ENCODE measurements at regions of chr1 and their contacts with region 1.

Region 1: DNA sequence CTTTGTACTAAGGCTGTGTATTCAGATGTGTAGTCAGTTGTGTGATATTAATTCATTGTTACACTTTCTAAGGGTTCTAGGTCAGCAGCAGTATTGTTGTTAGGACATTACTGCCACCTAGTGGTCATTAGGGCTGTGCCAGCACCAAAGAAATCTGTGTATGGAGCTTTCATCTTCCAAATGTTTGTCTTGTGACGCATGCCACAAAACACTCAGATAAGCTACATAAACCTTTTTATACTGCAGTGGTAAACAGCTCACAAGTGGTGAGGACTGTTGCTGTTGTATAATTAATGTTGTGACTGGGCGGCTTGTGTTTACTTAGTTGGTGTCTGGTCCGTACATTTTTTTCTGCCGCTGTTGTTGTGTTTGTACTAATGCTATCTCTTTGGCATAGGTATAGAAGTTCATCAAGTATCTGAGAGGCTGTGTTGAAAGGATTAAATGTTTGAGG is 51.7 kb downstream of the S1PR1 start:
- DNase-seq: peak; percentile 56
- ATAC-seq: peak; percentile 75
- H3K4me3 Mint-ChIP-seq: no peak overlapping the region
- H3K27ac Mint-ChIP-seq: no peak overlapping the region
- H3K4me1 Mint-ChIP-seq: peaks cover 20% of the 10 kb centered on the region
- H3K27me3 Mint-ChIP-seq: no peaks in the 10 kb centered on the region
- CTCF ChIP-seq: peak; percentile 82

Region 2: GRCh38 chr1:101136739-101137138 is 151.8 kb before region 1 on chr1:
- CTCF ChIA-PET with region 1: interaction called, 25 read pairs
- POLR2A ChIA-PET with region 1: no interaction called
- DNase-seq: no peak
- ATAC-seq: peak; percentile 76
- H3K4me3 Mint-ChIP-seq: peak overlapping the region; percentile 51
- H3K27ac Mint-ChIP-seq: peak overlapping the region; percentile 35; the same call in 1 of the 2 replicates
- H3K4me1 Mint-ChIP-seq: peaks cover 40% of the 10 kb centered on the region
- H3K27me3 Mint-ChIP-seq: no peaks in the 10 kb centered on the region
- CTCF ChIP-seq: no peak

Region 3: GRCh38 chr1:101203820-101204540 is 84.5 kb before region 1 on chr1:
- CTCF ChIA-PET with region 1: no interaction called
- POLR2A ChIA-PET with region 1: no interaction called
- DNase-seq: no peak
- ATAC-seq: no peak
- H3K4me3 Mint-ChIP-seq: no peak overlapping the region
- H3K27ac Mint-ChIP-seq: no peak overlapping the region
- H3K4me1 Mint-ChIP-seq: peaks cover 5% of the 10 kb centered on the region
- H3K27me3 Mint-ChIP-seq: no peaks in the 10 kb centered on the region
- CTCF ChIP-seq: no peak

Region 4: GRCh38 chr1:101228424-101229134 is 59.9 kb before region 1 on chr1:
- CTCF ChIA-PET with region 1: no interaction called
- POLR2A ChIA-PET with region 1: no interaction called
- DNase-seq: no peak
- ATAC-seq: no peak
- H3K4me3 Mint-ChIP-seq: no peak overlapping the region
- H3K27ac Mint-ChIP-seq: no peak overlapping the region
- H3K4me1 Mint-ChIP-seq: 0 out of 2 replicates have a peak, but pooled peaks cover 2% of the 10 kb centered on the region
- H3K27me3 Mint-ChIP-seq: no peaks in the 10 kb centered on the region
- CTCF ChIP-seq: no peak

Region 5: DNA sequence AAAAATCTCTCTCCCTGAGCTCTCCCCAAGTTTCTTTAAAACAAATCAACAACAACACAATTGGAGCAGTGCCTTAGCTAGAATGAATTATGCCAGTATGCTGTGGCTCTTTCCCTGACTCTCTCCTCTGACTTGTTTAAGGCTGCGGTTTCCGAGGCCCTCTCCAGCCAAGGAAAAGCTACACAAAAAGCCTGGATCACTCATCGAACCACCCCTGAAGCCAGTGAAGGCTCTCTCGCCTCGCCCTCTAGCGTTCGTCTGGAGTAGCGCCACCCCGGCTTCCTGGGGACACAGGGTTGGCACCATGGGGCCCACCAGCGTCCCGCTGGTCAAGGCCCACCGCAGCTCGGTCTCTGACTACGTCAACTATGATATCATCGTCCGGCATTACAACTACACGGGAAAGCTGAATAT is 49.8 kb before region 1 on chr1:
- CTCF ChIA-PET with region 1: interaction called, 21 read pairs
- POLR2A ChIA-PET with region 1: no interaction called
- DNase-seq: peak; percentile 93
- ATAC-seq: peak; percentile 59
- H3K4me3 Mint-ChIP-seq: peak overlapping the region; percentile 86
- H3K27ac Mint-ChIP-seq: no peak overlapping the region
- H3K4me1 Mint-ChIP-seq: peaks cover 24% of the 10 kb centered on the region
- H3K27me3 Mint-ChIP-seq: peaks cover 47% of the 10 kb centered on the region
- CTCF ChIP-seq: peak; percentile 79